ENCODE measurements at regions of chr7 and their contacts with region 1.

Region 1: DNA sequence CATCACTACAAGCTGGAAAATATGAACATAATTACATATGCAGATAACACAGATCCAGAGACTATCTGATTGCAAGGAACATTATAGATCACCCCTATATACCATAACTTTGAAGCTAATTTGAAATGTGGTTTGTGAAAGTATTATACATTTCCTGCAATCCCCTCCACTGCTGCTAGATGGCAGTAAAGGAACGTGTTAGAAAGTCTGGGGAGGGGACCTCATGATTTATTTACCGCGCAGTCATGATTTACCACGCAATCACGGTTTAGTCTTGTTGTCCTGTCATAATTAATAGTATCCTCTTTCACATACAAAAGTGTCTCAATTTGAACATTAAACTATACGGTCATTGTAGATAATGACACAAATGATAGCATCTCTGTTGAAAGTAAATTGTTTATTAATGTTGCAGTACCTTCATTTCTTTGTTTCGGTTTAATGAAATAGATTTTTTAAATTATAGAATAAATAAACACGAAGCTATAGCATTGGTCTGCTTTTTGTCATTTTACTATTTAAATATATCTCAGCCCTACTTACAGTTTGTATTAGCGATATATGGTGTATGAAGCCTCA is 145.3 kb upstream of the PRSS1 start:
- DNase-seq: peak; percentile 81
- H3K4me3 ChIP-seq: peak overlapping the region; percentile 6 to 7; a peak in 2 of 4 replicates
- H3K27ac ChIP-seq: no peak overlapping the region
- H3K4me1 ChIP-seq: peaks cover 0 to 5% of the 10 kb centered on the region in 2 experiments; a peak in 2 of 4 replicates
- H3K27me3 ChIP-seq: no peaks in the 10 kb centered on the region
- CTCF ChIP-seq: peak; percentile 99
- EP300 ChIP-seq: no peak
- RAD21 ChIP-seq: peak; percentile 100

Region 2: GRCh38 chr7:142523821-142524460 is 80.0 kb before region 1 on chr7:
- CTCF ChIA-PET with region 1: interaction called, 52 read pairs
- POLR2A ChIA-PET with region 1: no interaction called
- DNase-seq: no peak
- H3K4me3 ChIP-seq: no peak overlapping the region
- H3K27ac ChIP-seq: no peak overlapping the region
- H3K4me1 ChIP-seq: peaks cover 0 to 11% of the 10 kb centered on the region in 2 experiments; a peak in 2 of 4 replicates
- H3K27me3 ChIP-seq: peaks cover 63% of the 10 kb centered on the region; the same call in 1 of the 2 replicates
- CTCF ChIP-seq: peak; percentile 39; the same call in 1 of the 2 replicates
- EP300 ChIP-seq: no peak
- RAD21 ChIP-seq: peak; percentile 14; the same call in 1 of the 2 replicates

Region 3: DNA sequence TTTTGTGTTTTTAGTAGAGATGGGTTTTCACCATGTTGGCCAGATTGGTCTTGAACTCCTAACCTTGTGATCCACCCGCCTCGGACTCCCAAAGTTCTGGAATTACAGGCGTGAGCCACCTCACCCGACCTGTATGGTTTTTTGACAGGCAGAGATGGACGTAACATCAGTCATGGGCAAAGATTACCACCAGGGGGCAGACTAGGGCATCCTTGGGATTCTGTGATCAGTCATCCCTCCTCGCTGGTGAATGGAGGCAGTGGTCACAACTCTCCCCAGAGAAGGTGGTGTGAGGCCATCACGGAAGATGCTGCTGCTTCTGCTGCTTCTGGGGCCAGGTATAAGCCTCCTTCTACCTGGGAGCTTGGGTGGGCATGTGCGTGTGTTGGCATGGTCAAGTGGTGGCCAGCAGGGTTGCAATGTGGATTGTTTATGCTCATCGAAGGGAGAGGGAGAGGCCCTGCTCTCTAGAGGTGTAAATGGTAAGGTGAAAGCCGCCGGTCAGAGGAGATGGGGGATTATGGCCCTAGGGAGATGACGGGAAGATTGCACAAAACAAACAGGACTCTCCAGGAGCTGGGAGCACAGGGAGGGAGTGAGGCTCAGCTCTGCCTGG is 22.6 kb after region 1 on chr7:
- CTCF ChIA-PET with region 1: interaction called, 87 read pairs
- POLR2A ChIA-PET with region 1: no interaction called
- DNase-seq: peak; percentile 52
- H3K4me3 ChIP-seq: no peak overlapping the region
- H3K27ac ChIP-seq: no peak overlapping the region
- H3K4me1 ChIP-seq: no peaks in the 10 kb centered on the region; a peak in 1 of 4 replicates
- H3K27me3 ChIP-seq: no peaks in the 10 kb centered on the region
- CTCF ChIP-seq: peak; percentile 73
- EP300 ChIP-seq: no peak
- RAD21 ChIP-seq: peak; percentile 31; the same call in 1 of the 2 replicates

Region 4: DNA sequence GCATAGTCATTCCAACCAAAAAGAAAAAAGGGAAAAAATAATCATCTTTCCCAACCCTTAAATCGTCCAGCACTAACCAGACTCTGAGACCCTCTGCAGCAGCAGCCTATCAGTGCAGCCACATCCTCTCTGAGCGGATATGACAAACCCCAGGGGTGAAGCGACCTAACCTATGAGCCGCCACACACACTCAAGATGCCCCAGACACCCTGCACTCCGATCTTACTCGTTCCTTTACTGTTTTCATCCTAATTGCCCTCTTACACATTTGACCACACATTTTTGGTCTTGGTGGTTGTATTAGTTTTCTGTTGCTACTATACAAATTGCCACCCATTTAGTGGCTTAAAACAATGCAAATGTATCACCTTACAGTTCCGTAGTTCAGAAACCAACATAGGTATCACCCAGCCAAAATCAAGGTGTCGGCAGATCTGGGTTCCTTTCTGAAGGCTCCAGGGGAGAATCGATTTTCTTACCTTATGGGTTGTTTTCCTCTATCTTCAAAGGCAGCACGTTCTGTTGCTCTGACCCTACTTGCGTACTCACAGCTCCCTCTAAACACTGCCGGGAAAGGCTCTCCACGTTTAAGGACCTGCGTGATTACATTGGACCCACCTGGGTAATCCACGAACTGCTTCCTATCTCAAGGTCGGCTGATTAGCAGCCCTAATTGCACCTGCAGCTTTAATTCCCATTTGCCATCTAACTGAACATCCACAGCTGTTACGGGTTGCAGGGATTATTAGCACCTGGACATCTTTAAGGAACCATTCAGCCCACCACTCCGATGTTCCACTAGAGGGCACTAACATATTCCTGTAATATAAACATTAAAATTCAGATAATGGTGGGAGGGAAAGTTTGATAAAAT is 108.0 kb after region 1 on chr7:
- CTCF ChIA-PET with region 1: interaction called, 27 read pairs
- POLR2A ChIA-PET with region 1: no interaction called
- DNase-seq: peak; percentile 36
- H3K4me3 ChIP-seq: no peak overlapping the region
- H3K27ac ChIP-seq: no peak overlapping the region
- H3K4me1 ChIP-seq: no peaks in the 10 kb centered on the region; a peak in 1 of 4 replicates
- H3K27me3 ChIP-seq: peaks cover 6% of the 10 kb centered on the region; the same call in 1 of the 2 replicates
- CTCF ChIP-seq: peak; percentile 90
- EP300 ChIP-seq: no peak
- RAD21 ChIP-seq: peak; percentile 59

Region 5: DNA sequence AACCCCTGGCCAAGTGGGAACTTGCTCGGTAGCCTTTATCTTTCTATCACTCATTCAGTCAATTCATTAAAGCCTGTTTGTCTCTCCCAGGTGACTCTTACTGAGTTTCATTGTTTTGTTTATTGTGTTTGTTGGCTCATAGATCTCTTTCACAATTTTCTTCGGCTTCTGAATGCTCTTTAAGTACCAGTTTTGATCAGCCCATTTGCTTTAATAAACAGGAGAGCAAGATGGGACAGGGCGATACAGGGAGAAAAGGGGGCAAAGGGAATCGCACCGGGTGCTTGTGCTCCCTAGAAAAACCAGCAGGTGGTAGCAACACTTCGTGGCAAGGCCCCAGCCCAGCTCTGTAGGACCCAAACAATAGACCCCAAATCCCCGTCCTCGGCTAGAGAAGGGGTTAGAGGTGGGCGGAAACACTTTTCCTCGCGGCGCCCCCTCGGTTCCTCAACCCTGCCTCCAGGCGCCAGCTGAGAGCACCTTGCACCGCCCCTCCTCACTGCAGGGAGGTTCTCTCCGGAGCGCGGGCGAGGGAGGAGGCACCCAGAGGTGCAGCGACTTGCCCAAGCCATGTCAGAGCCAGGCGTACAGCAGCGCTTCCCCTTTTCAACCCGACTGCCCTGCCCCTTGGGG is 249.9 kb after region 1 on chr7:
- CTCF ChIA-PET with region 1: interaction called, 19 read pairs
- POLR2A ChIA-PET with region 1: no interaction called
- DNase-seq: peak; percentile 92
- H3K4me3 ChIP-seq: peak overlapping the region; percentile 61 to 89
- H3K27ac ChIP-seq: no peak overlapping the region; a peak in 1 of 4 replicates
- H3K4me1 ChIP-seq: peaks cover 0 to 14% of the 10 kb centered on the region in 2 experiments; a peak in 1 of 4 replicates
- H3K27me3 ChIP-seq: peaks cover 42% of the 10 kb centered on the region; the same call in 1 of the 2 replicates
- CTCF ChIP-seq: peak; percentile 96
- EP300 ChIP-seq: no peak
- RAD21 ChIP-seq: peak; percentile 81

Region 6: DNA sequence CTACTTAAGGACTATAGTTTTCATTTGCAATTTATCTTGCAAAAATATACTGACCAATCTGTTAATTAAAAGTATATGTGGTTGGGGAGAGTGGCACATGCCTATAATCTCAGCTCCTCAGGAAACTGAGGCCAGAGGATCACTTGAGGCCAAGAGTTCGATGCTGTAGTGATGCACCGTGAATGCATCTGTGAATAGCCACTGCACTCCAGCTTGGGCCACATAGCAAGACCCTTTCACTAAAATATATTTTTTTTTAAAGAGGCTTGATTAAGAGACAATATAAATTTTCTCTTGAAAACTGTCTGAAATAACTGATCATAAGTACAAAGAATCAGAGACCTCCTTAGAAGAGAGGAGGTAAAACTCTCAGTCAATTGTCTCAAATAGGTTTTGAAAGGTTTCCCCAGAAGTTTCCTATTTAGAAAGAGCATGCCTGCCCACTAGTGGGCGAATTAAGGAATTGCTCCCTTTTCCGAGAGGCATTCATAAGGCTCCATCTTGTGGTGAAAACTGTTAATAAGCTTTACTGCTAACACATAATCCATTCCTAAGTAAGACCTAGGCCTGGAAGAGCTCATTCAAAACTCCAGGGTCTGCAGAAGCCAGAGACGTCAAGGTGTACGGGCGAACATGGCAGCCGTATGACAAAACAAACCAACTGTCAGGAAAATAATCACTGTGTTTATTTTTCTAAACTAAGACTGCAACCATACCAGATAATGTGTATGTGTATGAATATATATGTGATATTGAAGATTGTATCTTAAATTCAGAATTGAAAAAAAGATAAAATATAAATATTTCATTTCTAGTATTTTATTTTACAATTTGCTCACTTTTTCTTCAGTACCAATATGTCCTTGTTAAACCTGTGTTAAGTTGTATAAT is 611.1 kb after region 1 on chr7:
- CTCF ChIA-PET with region 1: interaction called, 11 read pairs
- POLR2A ChIA-PET with region 1: no interaction called
- DNase-seq: peak; percentile 77
- H3K4me3 ChIP-seq: no peak overlapping the region; a peak in 1 of 4 replicates
- H3K27ac ChIP-seq: no peak overlapping the region
- H3K4me1 ChIP-seq: no peaks in the 10 kb centered on the region
- H3K27me3 ChIP-seq: peaks cover 7% of the 10 kb centered on the region; the same call in 1 of the 2 replicates
- CTCF ChIP-seq: peak; percentile 100
- EP300 ChIP-seq: no peak
- RAD21 ChIP-seq: peak; percentile 100